ENCODE measurements at regions of chr5 and their contacts with region 1.

Region 1: GRCh38 chr5:111158105-111158744 is 66.0 kb upstream of the CAMK4 start:
- DNase-seq: peak; percentile 69
- ATAC-seq: peak; percentile 88
- H3K4me3 ChIP-seq: no peak overlapping the region
- H3K27ac ChIP-seq: no peak overlapping the region
- H3K4me1 ChIP-seq: no peaks in the 10 kb centered on the region
- H3K27me3 ChIP-seq: no peaks in the 10 kb centered on the region
- CTCF ChIP-seq: peak; percentile 77 to 99 (median 99)
- POLR2A ChIP-seq: no peak
- RAD21 ChIP-seq: peak; percentile 95

Region 2: GRCh38 chr5:110594866-110595265 is 563.4 kb before region 1 on chr5:
- CTCF ChIA-PET with region 1: no interaction called
- POLR2A ChIA-PET with region 1: no interaction called
- RAD21 ChIA-PET with region 1: no interaction called
- intact Hi-C with region 1: no loop called
- DNase-seq: no peak
- ATAC-seq: no peak
- H3K4me3 ChIP-seq: no peak overlapping the region
- H3K27ac ChIP-seq: no peak overlapping the region
- H3K4me1 ChIP-seq: no peaks in the 10 kb centered on the region
- H3K27me3 ChIP-seq: no peaks in the 10 kb centered on the region
- CTCF ChIP-seq: no peak
- POLR2A ChIP-seq: no peak
- RAD21 ChIP-seq: no peak

Region 3: GRCh38 chr5:111116550-111116949 is 41.7 kb before region 1 on chr5:
- CTCF ChIA-PET with region 1: no interaction called
- POLR2A ChIA-PET with region 1: no interaction called
- RAD21 ChIA-PET with region 1: no interaction called
- intact Hi-C with region 1: no loop called
- DNase-seq: no peak
- ATAC-seq: no peak
- H3K4me3 ChIP-seq: no peak overlapping the region
- H3K27ac ChIP-seq: no peak overlapping the region
- H3K4me1 ChIP-seq: no peaks in the 10 kb centered on the region
- H3K27me3 ChIP-seq: no peaks in the 10 kb centered on the region
- CTCF ChIP-seq: no peak
- POLR2A ChIP-seq: no peak
- RAD21 ChIP-seq: no peak

Region 4: DNA sequence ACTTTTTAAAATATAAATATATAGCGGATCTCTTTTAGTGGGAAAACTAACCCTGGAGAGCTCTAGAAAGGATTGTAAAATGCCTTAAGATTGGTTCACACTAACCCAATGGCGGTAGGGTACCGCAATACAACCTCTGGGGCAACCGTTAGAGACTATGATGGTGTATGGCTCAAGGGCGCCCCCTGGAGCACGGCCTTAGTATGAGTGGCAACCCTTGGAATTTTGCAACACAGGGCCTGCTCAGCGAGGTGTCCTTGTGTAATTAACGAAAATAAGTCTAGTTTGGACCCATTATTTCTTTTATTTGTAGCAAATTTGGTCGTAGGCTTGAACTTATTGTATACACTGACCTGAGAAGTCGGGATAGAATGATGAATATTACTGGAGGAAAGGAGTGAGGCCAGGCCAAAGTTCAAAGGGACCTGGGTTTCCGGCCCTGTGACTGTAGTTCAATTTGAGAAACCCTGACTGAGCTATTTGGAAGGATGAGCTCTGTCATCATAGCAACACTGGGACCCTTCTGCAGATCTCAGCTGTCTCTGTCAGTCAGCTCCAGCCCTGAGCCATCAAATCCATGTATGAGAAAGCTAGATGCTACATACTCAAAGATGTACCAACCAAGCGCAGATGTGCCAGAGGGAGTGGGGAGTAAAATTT is 120.8 kb after region 1 on chr5:
- CTCF ChIA-PET with region 1: interaction called, 23 read pairs
- POLR2A ChIA-PET with region 1: no interaction called
- RAD21 ChIA-PET with region 1: interaction called in 1 of 2 experiments, 4 read pairs
- intact Hi-C with region 1: loop called (anchors 1 kb)
- DNase-seq: peak; percentile 42
- ATAC-seq: peak; percentile 100
- H3K4me3 ChIP-seq: no peak overlapping the region
- H3K27ac ChIP-seq: no peak overlapping the region
- H3K4me1 ChIP-seq: no peaks in the 10 kb centered on the region
- H3K27me3 ChIP-seq: no peaks in the 10 kb centered on the region
- CTCF ChIP-seq: peak; percentile 76 to 95 (median 89)
- POLR2A ChIP-seq: no peak
- RAD21 ChIP-seq: peak; percentile 85

Region 5: GRCh38 chr5:111478266-111478665 is 320.0 kb after region 1 on chr5:
- CTCF ChIA-PET with region 1: no interaction called
- POLR2A ChIA-PET with region 1: no interaction called
- RAD21 ChIA-PET with region 1: no interaction called
- intact Hi-C with region 1: loop called (anchors 5 kb)
- DNase-seq: no peak
- ATAC-seq: no peak
- H3K4me3 ChIP-seq: no peak overlapping the region
- H3K27ac ChIP-seq: no peak overlapping the region
- H3K4me1 ChIP-seq: no peaks in the 10 kb centered on the region
- H3K27me3 ChIP-seq: no peaks in the 10 kb centered on the region
- CTCF ChIP-seq: peak in 1 of 3 experiments; percentile 7; a peak in 1 of 6 replicates
- POLR2A ChIP-seq: no peak
- RAD21 ChIP-seq: peak; percentile 23; the same call in 1 of the 2 replicates

Region 6: DNA sequence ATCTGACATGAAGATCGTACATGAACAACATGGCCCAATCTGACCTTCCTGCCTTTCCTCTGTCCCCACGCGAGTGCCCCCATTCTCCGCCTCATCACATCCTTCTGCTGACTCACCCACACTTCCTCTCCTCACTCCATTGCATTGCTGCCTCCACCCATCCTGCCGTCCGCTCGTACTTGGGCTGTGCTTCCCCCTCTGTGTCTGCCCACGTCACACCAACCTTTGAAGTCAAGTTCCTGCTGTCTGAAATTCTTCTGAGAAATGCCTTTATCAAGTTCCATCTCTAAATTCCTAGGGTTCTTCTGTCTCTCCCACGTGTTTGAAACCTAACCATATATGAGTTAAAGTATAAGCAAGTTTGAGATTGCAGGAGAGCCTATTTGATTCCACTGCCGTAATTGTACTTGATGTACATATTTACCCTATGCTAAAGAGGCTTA is 372.1 kb after region 1 on chr5:
- CTCF ChIA-PET with region 1: interaction called, 13 read pairs
- POLR2A ChIA-PET with region 1: no interaction called
- RAD21 ChIA-PET with region 1: no interaction called
- intact Hi-C with region 1: no loop called
- DNase-seq: peak; percentile 61
- ATAC-seq: peak; percentile 97
- H3K4me3 ChIP-seq: peak overlapping the region; percentile 7 to 31
- H3K27ac ChIP-seq: peak overlapping the region; percentile 49
- H3K4me1 ChIP-seq: peaks cover 0 to 19% of the 10 kb centered on the region in 2 experiments; a peak in 3 of 4 replicates
- H3K27me3 ChIP-seq: no peaks in the 10 kb centered on the region
- CTCF ChIP-seq: no peak
- POLR2A ChIP-seq: peak; percentile 37
- RAD21 ChIP-seq: no peak